A549 (cell line): ENCODE measurements at regions of chr11 and their contacts with region 1.

Region 1: DNA sequence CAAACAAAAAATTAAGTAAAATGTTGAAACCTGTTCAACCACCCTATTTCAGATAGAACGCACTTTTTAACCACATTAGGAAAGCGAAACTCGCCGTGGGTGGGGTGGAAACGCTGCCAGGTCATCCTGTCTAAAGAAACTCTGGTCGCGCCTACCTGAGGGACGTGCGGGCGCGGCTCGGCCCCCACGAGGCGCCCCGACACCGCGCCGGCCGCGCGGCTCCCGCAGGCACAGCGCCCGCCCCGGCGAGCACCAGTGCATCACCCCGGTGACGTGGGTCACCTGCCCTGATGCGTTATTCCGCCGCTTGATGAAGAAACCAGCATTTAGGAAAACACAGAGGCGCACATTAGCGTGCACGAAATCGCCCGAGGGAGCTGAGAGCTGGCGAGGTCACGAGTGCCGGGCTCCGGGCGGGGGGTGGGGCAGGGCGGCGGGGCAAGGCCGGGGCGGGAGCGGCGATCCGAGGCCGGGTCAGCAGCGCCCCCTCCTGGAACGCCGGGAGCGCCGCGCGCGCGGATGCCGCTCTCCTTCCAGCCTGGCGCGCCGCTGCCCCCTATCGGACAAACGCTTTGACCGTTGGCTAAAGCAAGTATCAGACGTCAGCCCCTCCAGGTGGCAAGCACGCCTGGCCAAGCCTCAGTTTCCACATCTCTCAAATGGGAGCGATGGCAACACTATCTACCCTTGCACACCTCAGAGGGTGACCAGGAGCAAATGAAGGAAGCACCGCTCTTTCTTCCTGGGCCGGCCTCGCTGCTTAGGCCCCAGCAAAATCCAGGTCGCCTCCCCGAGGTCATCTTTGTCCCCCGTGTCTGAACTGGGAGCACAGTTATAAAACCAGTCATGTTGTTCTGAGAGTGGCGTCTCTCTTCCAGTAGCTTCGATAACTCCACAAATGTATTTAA is 15.7 kb upstream of the SNX32 start:
- DNase-seq: peak; percentile 81 to 88
- ATAC-seq: peak; percentile 91 to 93
- H3K4me3 ChIP-seq: peak overlapping the region; percentile 57
- H3K27ac ChIP-seq: peak overlapping the region; percentile 82 to 89
- H3K4me1 ChIP-seq: peaks cover 6% of the 10 kb centered on the region; the same call in 1 of the 3 replicates
- CTCF ChIP-seq: peak; percentile 100
- EP300 ChIP-seq: no peak; a peak in 1 of 5 replicates
- POLR2A ChIP-seq: peak; percentile 50
- RAD21 ChIP-seq: peak; percentile 87 to 99

Region 2: GRCh38 chr11:65726660-65727059 is 91.4 kb before region 1 on chr11:
- CTCF ChIA-PET with region 1: interaction called, 18 read pairs
- POLR2A ChIA-PET with region 1: interaction called, 6 read pairs
- DNase-seq: no peak
- ATAC-seq: peak in 1 of 2 experiments; percentile 58; a peak in 3 of 6 replicates
- H3K4me3 ChIP-seq: no peak overlapping the region
- H3K27ac ChIP-seq: no peak overlapping the region
- H3K4me1 ChIP-seq: no peaks in the 10 kb centered on the region
- CTCF ChIP-seq: 0 out of 3 replicates have a peak, but pooled peaks have one; percentile 8
- EP300 ChIP-seq: no peak
- POLR2A ChIP-seq: no peak
- RAD21 ChIP-seq: no peak

Region 3: DNA sequence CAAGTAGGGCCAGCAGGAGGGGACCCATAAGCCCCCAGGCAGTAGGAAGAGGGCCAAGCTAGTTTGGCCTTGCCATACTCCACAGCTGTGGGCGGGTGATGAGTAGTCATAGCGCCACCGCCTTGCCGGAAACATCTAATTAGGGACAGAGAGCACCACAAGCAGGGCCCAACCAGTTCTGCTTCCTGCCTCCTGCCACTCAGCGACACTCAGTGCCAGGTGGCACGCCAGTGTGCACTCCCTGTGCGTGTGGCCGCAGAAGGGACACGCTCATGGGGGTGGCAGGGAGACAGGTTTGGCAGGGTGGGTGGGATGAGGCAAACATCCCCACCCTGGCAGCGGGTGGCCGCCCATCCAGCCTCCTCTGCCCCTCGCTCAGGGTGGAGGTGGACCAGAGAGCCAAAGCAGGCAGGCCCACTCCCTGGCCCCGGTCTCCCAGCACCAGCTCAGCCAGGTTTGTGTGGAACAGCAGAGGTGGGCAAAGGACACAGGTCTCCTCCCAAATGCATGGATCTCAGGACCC is 26.3 kb before region 1 on chr11:
- CTCF ChIA-PET with region 1: interaction called, 30 read pairs
- POLR2A ChIA-PET with region 1: interaction called, 3 read pairs
- DNase-seq: no peak
- ATAC-seq: no peak
- H3K4me3 ChIP-seq: no peak overlapping the region
- H3K27ac ChIP-seq: no peak overlapping the region
- H3K4me1 ChIP-seq: peaks cover 14% of the 10 kb centered on the region; the same call in 2 of the 3 replicates
- CTCF ChIP-seq: no peak
- EP300 ChIP-seq: no peak
- POLR2A ChIP-seq: no peak
- RAD21 ChIP-seq: no peak

Region 4: GRCh38 chr11:65802841-65803240 is 15.2 kb before region 1 on chr11:
- CTCF ChIA-PET with region 1: interaction called, 29 read pairs
- POLR2A ChIA-PET with region 1: interaction called, 3 read pairs
- DNase-seq: no peak
- ATAC-seq: no peak
- H3K4me3 ChIP-seq: no peak overlapping the region
- H3K27ac ChIP-seq: no peak overlapping the region
- H3K4me1 ChIP-seq: no peaks in the 10 kb centered on the region
- CTCF ChIP-seq: no peak
- EP300 ChIP-seq: no peak
- POLR2A ChIP-seq: no peak
- RAD21 ChIP-seq: no peak

Region 5: DNA sequence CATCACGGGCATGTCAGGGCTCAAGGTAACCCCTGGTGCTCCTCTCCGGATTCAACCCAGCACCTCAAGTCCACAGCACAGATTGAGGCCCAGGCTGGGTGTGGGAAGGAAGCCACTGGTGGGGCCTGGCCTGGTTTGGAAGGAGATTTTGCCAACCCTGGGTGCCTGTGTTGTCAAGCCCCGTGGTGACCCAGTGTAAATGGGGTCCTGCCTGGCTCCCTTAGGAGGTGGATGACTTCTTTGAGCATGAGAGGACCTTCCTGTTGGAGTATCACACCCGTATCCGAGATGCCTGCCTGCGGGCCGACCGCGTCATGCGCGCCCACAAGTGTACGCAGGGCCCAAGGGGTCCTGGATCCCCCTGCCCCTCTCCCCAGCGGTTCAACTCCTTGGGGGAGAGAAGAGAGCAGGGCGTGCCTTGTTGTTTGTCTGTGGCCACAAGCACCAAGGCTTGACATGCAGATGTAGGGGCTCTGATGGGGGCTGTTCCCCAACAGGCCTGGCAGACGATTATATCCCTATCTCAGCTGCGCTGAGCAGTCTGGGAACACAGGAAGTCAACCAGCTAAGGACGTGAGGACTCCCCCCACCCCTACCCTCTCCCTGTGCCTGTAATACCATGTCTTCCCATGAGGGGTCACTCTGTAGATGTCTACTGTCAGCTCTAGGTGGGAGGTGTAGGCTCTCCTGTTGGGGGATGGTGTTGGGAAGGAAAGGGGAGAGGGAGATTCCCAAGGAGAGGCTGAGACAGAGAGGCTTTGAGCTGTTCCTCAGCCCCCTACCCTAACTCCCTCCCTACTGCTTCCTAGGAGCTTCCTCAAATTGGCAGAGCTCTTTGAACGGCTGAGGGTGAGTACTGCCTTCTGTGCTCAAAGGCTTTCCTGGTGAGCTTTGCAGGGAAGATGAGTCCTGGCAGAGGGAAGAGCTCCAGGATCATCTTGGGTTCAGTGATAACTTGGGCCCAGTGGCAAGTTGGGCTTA is 33.0 kb after region 1 on chr11:
- CTCF ChIA-PET with region 1: interaction called, 45 read pairs
- POLR2A ChIA-PET with region 1: no interaction called
- DNase-seq: peak in 1 of 2 experiments; percentile 72
- ATAC-seq: peak; percentile 33 to 60
- H3K4me3 ChIP-seq: no peak overlapping the region
- H3K27ac ChIP-seq: no peak overlapping the region
- H3K4me1 ChIP-seq: peaks cover 21% of the 10 kb centered on the region
- CTCF ChIP-seq: peak; percentile 35; the same call in 2 of the 3 replicates
- EP300 ChIP-seq: no peak
- POLR2A ChIP-seq: no peak
- RAD21 ChIP-seq: no peak